ENCODE measurements at regions of chr12 and their contacts with region 1.

Region 1: DNA sequence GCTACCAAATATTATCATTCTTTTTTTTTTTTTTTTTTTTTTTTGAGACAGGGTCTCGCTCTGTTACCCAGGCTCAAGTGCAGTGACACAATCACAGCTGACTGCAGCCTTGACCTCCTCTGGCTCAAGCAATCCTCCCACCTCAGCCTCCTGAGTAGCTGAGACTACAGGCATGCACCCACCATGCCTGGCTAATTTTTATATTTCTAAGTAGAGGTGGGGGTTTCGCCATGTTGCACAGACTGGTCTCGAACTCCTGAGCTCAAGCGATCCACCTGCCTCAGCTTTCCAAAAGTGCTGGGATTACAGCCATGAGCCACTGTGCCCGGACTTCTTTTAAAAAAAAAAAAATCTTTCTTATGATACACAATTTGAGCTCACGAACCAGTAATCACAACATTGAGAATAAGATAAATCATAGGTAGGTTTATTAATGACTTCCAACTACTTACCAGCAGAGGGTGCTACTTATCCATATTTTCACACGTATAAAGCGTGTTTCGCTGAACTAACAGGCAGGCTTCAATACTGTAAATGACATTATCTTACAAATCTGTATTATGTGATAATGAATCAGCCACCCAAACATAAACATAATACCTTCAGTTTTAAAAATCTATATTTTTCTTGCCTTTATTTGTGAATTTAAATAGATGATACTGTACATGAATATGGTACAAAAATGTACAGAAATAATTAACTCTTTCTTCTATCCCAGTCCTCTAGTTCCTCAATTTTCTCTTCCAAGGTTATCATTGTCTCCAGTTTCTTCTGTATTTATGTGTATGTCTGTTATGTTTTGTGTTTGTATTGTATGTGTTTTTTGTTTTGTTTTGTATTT is 42.5 kb upstream of the BCAT1 start:
- DNase-seq: peak in 2 of 5 donors; percentile 55 to 59
- H3K4me3 ChIP-seq: no peak overlapping the region
- H3K4me3 Mint-ChIP-seq: no peak overlapping the region
- H3K27ac ChIP-seq: no peak overlapping the region
- H3K27ac Mint-ChIP-seq: no peak overlapping the region
- H3K4me1 ChIP-seq: no peaks in the 10 kb centered on the region
- H3K4me1 Mint-ChIP-seq: no peaks in the 10 kb centered on the region
- H3K27me3 ChIP-seq: no peaks in the 10 kb centered on the region
- H3K27me3 Mint-ChIP-seq: peaks cover 1 to 8% of the 10 kb centered on the region in 2 donors

Region 2: DNA sequence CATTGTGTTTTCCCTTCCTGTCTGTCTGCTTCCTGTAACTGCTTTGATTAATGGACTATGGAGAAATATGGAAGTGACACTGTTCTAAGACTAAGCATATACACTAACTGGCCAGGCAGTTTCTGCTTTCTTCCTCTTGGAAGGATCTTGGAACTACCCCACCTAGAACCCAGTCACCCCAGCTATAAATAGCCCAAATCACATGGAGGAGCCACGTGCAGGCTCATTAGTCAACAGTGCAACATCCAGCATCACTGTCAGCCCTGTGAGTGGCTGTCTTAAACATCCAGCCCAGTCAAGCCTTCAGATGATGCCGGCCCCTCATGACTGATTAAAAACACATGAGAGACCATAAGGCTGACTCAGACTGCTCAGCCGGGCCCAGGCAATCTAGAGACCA is 81.8 kb before region 1 on chr12:
- CTCF ChIA-PET with region 1: no interaction called
- POLR2A ChIA-PET with region 1: no interaction called
- DNase-seq: no peak
- H3K4me3 ChIP-seq: no peak overlapping the region
- H3K4me3 Mint-ChIP-seq: no peak overlapping the region
- H3K27ac ChIP-seq: no peak overlapping the region
- H3K27ac Mint-ChIP-seq: no peak overlapping the region
- H3K4me1 ChIP-seq: no peaks in the 10 kb centered on the region
- H3K4me1 Mint-ChIP-seq: no peaks in the 10 kb centered on the region
- H3K27me3 ChIP-seq: no peaks in the 10 kb centered on the region
- H3K27me3 Mint-ChIP-seq: no peaks in the 10 kb centered on the region

Region 3: DNA sequence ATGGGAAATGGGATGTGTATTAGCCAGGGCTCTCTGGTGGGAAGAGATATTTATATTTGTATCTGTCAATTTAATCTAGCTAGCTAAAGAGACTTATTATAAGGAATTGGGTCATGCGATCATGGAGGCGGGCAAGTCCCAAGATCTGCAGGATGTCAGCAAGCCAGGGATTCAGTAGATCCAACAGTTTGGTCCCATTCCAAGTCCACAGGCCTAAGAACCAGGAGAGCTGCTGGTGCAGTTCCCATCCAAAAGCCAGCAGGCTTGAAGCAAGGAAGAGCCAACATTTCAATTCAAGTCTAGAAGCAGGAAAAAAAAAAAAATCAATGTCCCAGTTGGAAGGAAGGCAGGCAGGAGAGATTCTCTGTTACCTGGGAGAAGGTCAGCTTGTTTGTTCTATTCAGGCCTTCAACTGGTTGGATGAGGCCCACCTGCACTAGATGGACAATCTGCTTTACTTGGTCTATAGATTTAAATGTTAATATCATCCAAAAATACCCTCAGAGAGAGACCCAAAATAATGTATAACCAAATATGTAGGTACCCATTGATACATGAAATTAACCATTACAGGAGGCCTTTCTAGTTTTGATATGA is 18.2 kb after region 1 on chr12:
- CTCF ChIA-PET with region 1: no interaction called
- POLR2A ChIA-PET with region 1: no interaction called
- DNase-seq: no peak
- H3K4me3 ChIP-seq: no peak overlapping the region
- H3K4me3 Mint-ChIP-seq: no peak overlapping the region
- H3K27ac ChIP-seq: no peak overlapping the region
- H3K27ac Mint-ChIP-seq: no peak overlapping the region
- H3K4me1 ChIP-seq: no peaks in the 10 kb centered on the region
- H3K4me1 Mint-ChIP-seq: no peaks in the 10 kb centered on the region
- H3K27me3 ChIP-seq: no peaks in the 10 kb centered on the region
- H3K27me3 Mint-ChIP-seq: no peaks in the 10 kb centered on the region

Region 4: DNA sequence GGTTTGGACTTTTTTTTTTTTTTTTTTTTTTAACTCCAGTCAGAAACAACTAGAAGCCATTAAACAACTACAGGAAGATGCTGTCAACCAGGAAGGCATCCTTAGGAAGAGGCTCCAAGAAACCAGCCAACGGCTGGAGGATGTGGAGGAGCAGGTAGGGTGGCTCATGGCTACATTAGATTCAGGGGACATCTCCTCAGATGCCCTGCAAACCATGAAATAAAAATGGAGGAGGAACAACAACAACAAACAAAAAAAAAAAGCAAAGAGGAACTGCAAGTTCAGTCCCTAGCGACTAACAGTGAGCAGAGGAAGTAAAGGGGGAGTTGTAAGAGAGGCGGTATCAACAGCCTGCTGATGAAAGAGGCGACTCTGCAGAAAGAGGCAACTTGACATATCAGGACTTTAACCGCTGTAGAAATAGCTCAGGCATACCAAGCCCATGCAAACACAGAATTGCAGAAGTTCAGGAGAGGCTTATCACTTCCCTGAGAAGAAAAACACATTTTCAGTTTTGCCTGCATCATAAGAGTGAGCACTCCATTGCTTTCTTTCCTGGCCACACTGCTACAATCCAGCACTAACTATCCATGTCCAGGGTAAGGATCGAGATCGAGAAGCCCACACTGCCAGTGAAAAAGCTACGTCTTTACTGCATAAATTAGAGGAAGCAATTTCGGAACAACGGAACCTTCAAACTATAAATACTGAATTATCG is 60.9 kb after region 1 on chr12:
- CTCF ChIA-PET with region 1: interaction called, 8 read pairs
- POLR2A ChIA-PET with region 1: interaction called, 17 read pairs
- DNase-seq: peak; percentile 19 to 87 (median 70)
- H3K4me3 ChIP-seq: peak overlapping the region; percentile 64
- H3K4me3 Mint-ChIP-seq: peak overlapping the region; percentile 91 to 100 (median 98)
- H3K27ac ChIP-seq: peak overlapping the region; percentile 78
- H3K27ac Mint-ChIP-seq: peak overlapping the region; percentile 91 to 99 (median 98)
- H3K4me1 ChIP-seq: peaks cover 38% of the 10 kb centered on the region
- H3K4me1 Mint-ChIP-seq: peaks cover 43 to 55% (median 49%) of the 10 kb centered on the region in 3 donors
- H3K27me3 ChIP-seq: no peaks in the 10 kb centered on the region
- H3K27me3 Mint-ChIP-seq: peaks cover 0 to 3% of the 10 kb centered on the region in 2 donors

Region 5: DNA sequence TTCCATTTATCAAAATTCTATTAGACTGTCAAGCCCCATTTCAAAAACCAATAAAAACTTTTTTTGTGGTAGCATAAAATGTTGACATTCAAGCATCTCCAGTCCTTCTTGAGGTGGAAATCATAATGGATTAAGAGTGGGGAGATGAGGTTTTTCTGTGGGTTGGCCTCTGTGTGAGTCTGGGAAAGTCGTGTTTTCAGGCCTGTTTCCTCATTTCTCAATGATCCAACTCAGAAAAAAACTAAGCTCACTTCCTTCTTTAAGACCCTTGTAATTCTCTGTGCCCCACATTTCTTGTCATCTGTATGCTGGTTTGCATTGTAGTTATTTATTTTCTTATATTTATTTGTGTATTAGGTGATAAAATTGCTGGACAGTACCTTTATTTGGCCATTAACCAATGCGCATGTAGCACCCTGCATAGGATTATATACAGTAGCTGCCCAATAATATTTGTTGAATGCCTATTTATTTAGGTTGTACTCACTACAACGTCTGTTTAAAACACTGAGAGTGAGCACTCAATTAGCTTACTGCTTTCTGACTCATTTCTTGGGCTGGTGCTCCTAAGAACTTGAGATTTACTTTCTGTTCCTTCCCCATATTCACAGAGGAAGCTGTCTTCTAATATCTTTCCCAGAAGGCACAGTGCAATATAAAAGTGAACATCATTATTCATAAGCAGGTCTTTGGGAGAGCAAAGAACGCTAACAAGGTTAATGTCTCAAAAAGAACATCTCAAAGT is 81.6 kb after region 1 on chr12:
- CTCF ChIA-PET with region 1: no interaction called
- POLR2A ChIA-PET with region 1: no interaction called
- DNase-seq: no peak
- H3K4me3 ChIP-seq: no peak overlapping the region
- H3K4me3 Mint-ChIP-seq: no peak overlapping the region
- H3K27ac ChIP-seq: no peak overlapping the region
- H3K27ac Mint-ChIP-seq: no peak overlapping the region
- H3K4me1 ChIP-seq: no peaks in the 10 kb centered on the region
- H3K4me1 Mint-ChIP-seq: peaks cover 22 to 55% (median 32%) of the 10 kb centered on the region in 3 donors
- H3K27me3 ChIP-seq: no peaks in the 10 kb centered on the region
- H3K27me3 Mint-ChIP-seq: no peaks in the 10 kb centered on the region

Region 6: DNA sequence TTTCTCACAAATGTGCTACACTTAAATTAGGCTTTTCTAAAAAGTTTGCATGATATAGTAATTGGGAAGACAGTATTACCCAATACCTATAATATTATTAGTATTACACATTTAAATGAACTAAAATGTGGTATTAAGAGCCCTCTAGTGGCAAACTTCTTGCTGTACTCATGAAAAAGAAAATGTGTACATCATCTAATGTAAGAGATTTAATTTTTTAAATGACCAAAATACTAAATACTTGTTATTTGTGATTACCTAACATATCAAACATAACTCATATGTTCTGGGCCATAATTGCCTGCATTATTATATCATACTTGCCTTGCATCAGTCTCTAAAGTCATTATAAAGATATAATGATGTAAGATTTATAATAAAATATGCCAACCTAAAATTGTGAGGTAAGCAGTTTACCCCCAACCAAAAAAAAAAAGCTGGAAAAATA is 139.3 kb after region 1 on chr12:
- CTCF ChIA-PET with region 1: interaction called, 65 read pairs
- POLR2A ChIA-PET with region 1: no interaction called
- DNase-seq: peak in 2 of 5 donors; percentile 21 to 39
- H3K4me3 ChIP-seq: no peak overlapping the region
- H3K4me3 Mint-ChIP-seq: no peak overlapping the region
- H3K27ac ChIP-seq: no peak overlapping the region
- H3K27ac Mint-ChIP-seq: no peak overlapping the region
- H3K4me1 ChIP-seq: no peaks in the 10 kb centered on the region
- H3K4me1 Mint-ChIP-seq: no peaks in the 10 kb centered on the region
- H3K27me3 ChIP-seq: no peaks in the 10 kb centered on the region
- H3K27me3 Mint-ChIP-seq: peaks cover 0 to 2% of the 10 kb centered on the region in 2 donors